ENCODE measurements at regions of chr9 and their contacts with region 1.

Region 1: DNA sequence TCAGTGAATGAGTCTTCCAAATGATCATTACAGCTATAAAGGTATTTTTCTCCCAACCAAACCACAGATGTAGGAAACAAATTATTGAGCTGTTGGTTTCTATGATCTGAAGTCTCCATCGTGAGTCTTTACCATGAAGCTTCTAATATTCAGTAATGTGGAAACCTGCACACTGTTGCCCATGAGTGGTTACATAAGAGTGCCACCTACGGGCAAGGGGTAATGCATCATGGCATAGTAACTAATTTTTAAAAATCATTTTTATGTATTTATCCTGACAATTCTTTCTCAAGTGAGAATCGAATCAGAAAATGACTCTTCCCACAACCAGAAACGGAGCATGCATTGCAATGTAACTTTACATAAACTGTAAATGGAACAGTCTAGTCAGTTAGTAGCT is 282.5 kb upstream of the SMARCA2 start:
- DNase-seq: no peak
- H3K4me3 Mint-ChIP-seq: no peak overlapping the region
- H3K27ac Mint-ChIP-seq: no peak overlapping the region
- H3K4me1 Mint-ChIP-seq: no peaks in the 10 kb centered on the region
- H3K27me3 Mint-ChIP-seq: no peaks in the 10 kb centered on the region

Region 2: DNA sequence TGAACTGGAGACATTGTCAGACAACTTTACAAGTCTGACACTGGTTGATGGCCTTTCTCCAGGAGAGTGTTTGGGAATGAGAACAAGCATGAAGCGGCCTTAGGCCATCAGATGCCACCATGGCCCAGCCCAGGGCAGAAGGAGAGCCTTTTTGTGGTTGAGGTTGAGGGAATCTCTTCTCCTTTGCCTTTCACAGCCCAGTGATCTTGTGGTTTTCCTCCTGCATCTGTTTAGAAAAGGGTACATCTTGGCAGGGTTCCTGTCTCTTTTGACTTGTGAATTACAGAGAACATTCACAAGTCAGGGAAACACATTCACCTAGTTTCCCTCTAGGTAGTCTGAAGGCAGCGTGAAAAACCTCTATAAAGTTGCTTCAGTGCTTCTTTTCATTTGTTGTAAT is 655.1 kb before region 1 on chr9:
- intact Hi-C with region 1: no loop called
- DNase-seq: no peak
- H3K4me3 Mint-ChIP-seq: no peak overlapping the region
- H3K27ac Mint-ChIP-seq: no peak overlapping the region
- H3K4me1 Mint-ChIP-seq: no peaks in the 10 kb centered on the region
- H3K27me3 Mint-ChIP-seq: no peaks in the 10 kb centered on the region

Region 3: DNA sequence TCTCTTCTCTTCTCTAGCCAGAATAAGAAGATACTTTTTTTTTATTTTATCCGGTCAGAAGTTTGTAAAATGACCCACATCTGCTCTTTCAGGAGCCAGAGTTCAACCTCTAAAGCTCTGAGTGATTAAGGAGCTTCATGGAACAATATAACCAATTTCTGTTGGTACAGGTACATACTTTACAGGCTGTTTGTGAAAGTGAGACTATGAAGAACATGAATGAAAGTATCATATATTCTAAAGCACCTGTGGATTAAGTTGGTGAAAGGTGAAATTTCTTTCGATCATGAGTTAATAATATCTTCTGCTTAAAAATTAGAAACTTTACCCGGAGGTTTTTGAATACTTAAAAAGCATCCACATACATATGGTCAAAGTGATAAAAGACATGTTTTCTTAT is 617.3 kb before region 1 on chr9:
- intact Hi-C with region 1: loop called (anchors 10 kb)
- DNase-seq: no peak
- H3K4me3 Mint-ChIP-seq: no peak overlapping the region
- H3K27ac Mint-ChIP-seq: no peak overlapping the region
- H3K4me1 Mint-ChIP-seq: no peaks in the 10 kb centered on the region
- H3K27me3 Mint-ChIP-seq: no peaks in the 10 kb centered on the region

Region 4: DNA sequence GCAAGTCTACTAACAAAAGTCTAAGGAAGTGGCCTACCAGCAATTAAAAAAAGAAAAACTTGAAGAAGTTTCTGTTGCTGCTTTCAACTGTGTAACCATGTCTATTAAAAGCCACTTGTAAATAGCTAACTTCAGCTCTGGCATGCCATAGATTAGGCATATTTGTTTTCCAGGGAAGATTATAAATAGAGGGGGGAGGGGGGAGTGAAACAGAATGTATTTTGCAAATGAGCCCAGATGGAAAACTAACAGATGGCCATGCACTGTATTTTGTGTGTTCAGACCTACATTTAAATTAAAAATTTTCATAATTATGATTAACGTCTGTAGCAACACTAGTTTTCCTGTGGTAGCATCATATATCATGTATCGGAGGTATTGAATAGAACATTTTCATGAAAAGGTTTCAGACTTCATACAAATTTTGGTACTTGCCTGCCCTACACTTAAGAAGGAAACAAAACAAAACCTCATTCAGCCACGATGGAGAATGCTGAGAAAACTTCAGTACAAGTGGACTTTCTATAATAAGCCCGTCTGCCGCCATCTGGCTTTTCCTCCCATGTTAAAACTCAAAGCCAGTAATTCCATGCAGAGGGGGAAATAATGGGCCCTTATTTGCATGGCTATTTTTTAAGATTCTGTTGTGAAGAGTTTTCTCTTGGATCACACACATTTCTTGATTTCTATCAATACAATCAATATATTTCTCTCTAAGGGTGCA is 62.0 kb after region 1 on chr9:
- intact Hi-C with region 1: no loop called
- DNase-seq: no peak
- H3K4me3 Mint-ChIP-seq: no peak overlapping the region
- H3K27ac Mint-ChIP-seq: no peak overlapping the region
- H3K4me1 Mint-ChIP-seq: no peaks in the 10 kb centered on the region
- H3K27me3 Mint-ChIP-seq: no peaks in the 10 kb centered on the region